Right ventricle myocardium inferior (tissue), 1 donor: ENCODE measurements at regions of chr2 and their contacts with region 1.

Region 1: GRCh38 chr2:163493359-163494298 is 242.2 kb downstream of the FIGN start:
- DNase-seq: no peak
- ATAC-seq: peak; percentile 42

Region 2: GRCh38 chr2:163338270-163338669 is 155.4 kb before region 1 on chr2:
- intact Hi-C with region 1: no loop called
- DNase-seq: no peak
- ATAC-seq: no peak

Region 3: DNA sequence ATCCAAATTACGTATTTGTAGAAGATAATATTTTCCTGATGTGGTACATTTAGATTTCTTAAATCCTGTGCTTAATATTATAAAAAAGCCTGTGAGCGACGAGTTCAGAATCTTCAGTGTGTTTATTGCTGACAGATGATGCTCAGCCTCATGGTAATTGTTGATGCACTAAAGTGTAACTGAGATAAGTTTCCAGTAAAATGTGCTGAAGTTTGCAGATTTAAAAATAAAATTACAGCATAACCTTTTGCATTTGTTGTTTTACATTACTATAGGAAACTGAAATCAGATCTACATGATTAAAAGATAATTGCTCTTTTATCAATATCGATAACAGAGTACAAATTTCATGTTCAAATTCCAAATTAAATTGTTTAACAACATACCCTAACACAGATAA is 65.4 kb before region 1 on chr2:
- intact Hi-C with region 1: no loop called
- DNase-seq: no peak
- ATAC-seq: no peak

Region 4: DNA sequence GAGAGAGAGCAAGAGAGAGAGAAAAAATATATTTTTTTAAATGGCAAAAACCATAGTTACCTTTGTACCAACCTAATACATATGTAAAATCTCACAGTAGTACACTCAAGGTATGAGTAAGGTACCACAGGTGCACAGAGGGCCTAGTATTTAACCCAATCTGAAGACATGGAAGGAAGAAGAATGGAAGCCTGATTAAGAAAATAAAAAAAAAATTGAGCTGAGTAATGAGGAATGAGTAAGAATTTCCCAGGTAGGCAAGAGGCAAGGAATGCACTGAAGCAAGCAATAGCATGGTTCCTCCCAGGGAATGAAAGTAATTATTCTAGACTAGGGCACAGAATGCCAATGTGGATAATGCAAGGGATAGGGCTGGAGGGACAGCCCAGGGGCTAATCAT is 52.0 kb before region 1 on chr2:
- intact Hi-C with region 1: no loop called
- DNase-seq: no peak
- ATAC-seq: no peak

Region 5: GRCh38 chr2:163601377-163601776 is 107.7 kb after region 1 on chr2:
- intact Hi-C with region 1: loop called (anchors 10 kb)
- DNase-seq: no peak
- ATAC-seq: no peak